Psoas muscle (tissue), 8 donors: ENCODE measurements at regions of chr14 and their contacts with region 1.

Region 1: GRCh38 chr14:34128665-34129064 is 177.8 kb upstream of the EGLN3 start:
- DNase-seq: peak; percentile 19 to 57
- ATAC-seq: peak; percentile 14 to 60 (median 46)
- H3K4me3 ChIP-seq: no peak overlapping the region
- H3K27ac ChIP-seq: peak overlapping the region; percentile 85
- H3K4me1 ChIP-seq: peaks cover 36% of the 10 kb centered on the region
- H3K27me3 ChIP-seq: no peaks in the 10 kb centered on the region
- CTCF ChIP-seq: no peak

Region 2: GRCh38 chr14:33950320-33951182 is 178.1 kb before region 1 on chr14 and contains the start of gene EGLN3:
- intact Hi-C with region 1: loop called in 1 of 2 experiments (anchors 5 kb)
- DNase-seq: peak; percentile 89 to 94
- ATAC-seq: peak; percentile 98 to 99 (median 99)
- H3K4me3 ChIP-seq: peak within 1 kb of the TSS; percentile 81
- H3K27ac ChIP-seq: peak within 1 kb of the TSS; percentile 86
- H3K4me1 ChIP-seq: peaks cover 22% of the 10 kb centered on the region
- H3K27me3 ChIP-seq: no peaks in the 10 kb centered on the region
- CTCF ChIP-seq: no peak
- total RNA-seq, gene EGLN3: 6.7 to 58.7 (median 20.6) TPM

Region 3: GRCh38 chr14:34081576-34082136 is 47.0 kb before region 1 on chr14:
- intact Hi-C with region 1: loop called (anchors 5 kb)
- DNase-seq: no peak
- ATAC-seq: peak; percentile 61 to 81 (median 76)
- H3K4me3 ChIP-seq: peak overlapping the region; percentile 49
- H3K27ac ChIP-seq: peak overlapping the region; percentile 99
- H3K4me1 ChIP-seq: peaks cover 40% of the 10 kb centered on the region
- H3K27me3 ChIP-seq: no peaks in the 10 kb centered on the region
- CTCF ChIP-seq: no peak

Region 4: GRCh38 chr14:34087556-34087955 is 41.1 kb before region 1 on chr14:
- intact Hi-C with region 1: loop called (anchors 5 kb)
- DNase-seq: no peak
- ATAC-seq: no peak
- H3K4me3 ChIP-seq: no peak overlapping the region
- H3K27ac ChIP-seq: no peak overlapping the region
- H3K4me1 ChIP-seq: peaks cover 16% of the 10 kb centered on the region
- H3K27me3 ChIP-seq: no peaks in the 10 kb centered on the region
- CTCF ChIP-seq: no peak